ENCODE measurements at regions of chr3 and their contacts with region 1.

Region 1: GRCh38 chr3:101676765-101677435 is at the start of gene ZBTB11:
- DNase-seq: peak; percentile 100
- H3K4me3 ChIP-seq: peak within 1 kb of the TSS; percentile 86 to 98 (median 93)
- H3K27ac ChIP-seq: peak within 1 kb of the TSS; percentile 96 to 99 (median 98)
- H3K4me1 ChIP-seq: peaks cover 0 to 30% (median 17%) of the 10 kb centered on the region in 4 donors
- H3K27me3 ChIP-seq: no peaks in the 10 kb centered on the region
- CTCF ChIP-seq: peak in 2 of 4 experiments; percentile 26 to 42
- EP300 ChIP-seq: peak in 2 of 4 donors; percentile 37 to 47
- POLR2A ChIP-seq: peak; percentile 90 to 91
- total RNA-seq, gene ZBTB11: 18.6 to 24.4 (median 21.5) TPM

Region 2: GRCh38 chr3:101512646-101513418 is 164.1 kb before region 1 on chr3 and contains the start of gene SENP7:
- intact Hi-C with region 1: loop called (anchors 2 kb)
- DNase-seq: peak; percentile 92
- H3K4me3 ChIP-seq: peak within 1 kb of the TSS; percentile 76 to 88 (median 82)
- H3K27ac ChIP-seq: peak within 1 kb of the TSS; percentile 94 to 96 (median 95)
- H3K4me1 ChIP-seq: peaks cover 0 to 22% (median 14%) of the 10 kb centered on the region in 4 donors
- H3K27me3 ChIP-seq: peaks cover 0 to under 1% (median 0%) of the 10 kb centered on the region in 3 donors
- CTCF ChIP-seq: no peak
- EP300 ChIP-seq: peak in 1 of 4 donors; percentile 11
- POLR2A ChIP-seq: peak in 1 of 2 donors; percentile 13
- total RNA-seq, gene SENP7: 20.2 to 33.5 (median 30.4) TPM

Region 3: DNA sequence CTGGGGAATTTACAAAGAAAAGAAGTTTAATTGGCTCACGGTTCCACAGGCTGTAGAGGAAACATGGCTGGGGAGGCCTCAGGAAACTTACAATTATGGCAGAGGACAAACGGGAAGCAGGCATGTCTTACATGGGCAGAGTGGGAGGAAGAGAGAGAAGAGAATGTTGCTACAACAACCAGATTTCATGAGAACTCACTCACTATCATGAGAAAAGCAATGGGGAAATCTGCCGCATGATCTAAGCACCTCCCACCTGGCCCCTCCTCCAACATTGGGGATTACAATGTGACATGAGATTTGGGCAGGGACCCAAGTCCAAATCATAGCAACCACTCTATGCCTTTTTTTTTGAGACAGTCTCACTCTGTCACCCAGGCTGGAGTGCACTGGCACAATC is 74.2 kb before region 1 on chr3:
- intact Hi-C with region 1: no loop called
- DNase-seq: no peak
- H3K4me3 ChIP-seq: no peak overlapping the region
- H3K27ac ChIP-seq: no peak overlapping the region
- H3K4me1 ChIP-seq: no peaks in the 10 kb centered on the region
- H3K27me3 ChIP-seq: no peaks in the 10 kb centered on the region
- CTCF ChIP-seq: no peak
- EP300 ChIP-seq: no peak
- POLR2A ChIP-seq: no peak

Region 4: DNA sequence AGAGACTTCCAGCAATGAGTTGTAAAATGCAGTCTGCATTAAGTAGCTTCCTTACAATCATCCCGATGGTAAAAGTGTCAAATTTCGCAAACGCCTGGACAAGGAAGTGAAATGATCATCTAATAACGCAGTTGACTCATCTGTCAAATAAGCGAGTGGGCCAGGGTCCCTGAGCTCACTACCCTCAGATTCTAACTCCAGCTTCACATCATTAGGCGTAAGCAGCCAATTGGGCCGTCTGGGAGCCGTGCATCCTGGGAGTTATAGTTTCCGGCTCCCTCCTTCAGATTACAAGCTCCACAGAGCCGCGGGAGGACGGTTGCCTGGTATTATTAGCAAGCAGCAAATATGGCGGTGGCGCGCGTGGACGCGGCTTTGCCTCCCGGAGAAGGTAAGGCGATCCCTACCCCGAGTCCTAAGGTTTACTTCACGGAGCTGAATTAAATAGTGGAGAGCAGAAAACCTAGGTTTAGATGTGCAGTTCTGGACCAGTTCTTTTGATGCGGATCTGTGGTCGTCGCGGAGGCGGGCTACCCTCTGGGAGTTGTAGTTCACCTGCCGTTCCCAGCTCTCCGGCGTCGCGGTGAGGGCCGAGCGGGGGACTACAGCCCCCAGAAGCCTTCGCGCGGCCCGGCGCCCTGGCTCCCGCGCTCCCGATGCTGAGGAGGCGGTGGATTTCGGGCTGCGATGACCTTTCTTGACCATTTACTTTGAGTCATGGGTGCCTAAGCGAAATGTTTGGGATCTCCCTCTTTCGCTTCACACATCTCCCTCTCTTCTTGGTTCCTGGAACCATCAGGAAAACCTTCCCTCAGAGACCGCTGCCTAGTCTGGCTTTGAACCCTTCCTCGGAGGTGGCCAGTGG is 47.7 kb after region 1 on chr3 and contains the start of gene CEP97:
- intact Hi-C with region 1: loop called (anchors 2 kb)
- DNase-seq: peak; percentile 94
- H3K4me3 ChIP-seq: peak within 1 kb of the TSS; percentile 63 to 82 (median 66)
- H3K27ac ChIP-seq: peak within 1 kb of the TSS; percentile 76 to 86 (median 80)
- H3K4me1 ChIP-seq: peaks cover 0 to 11% (median 8%) of the 10 kb centered on the region in 4 donors
- H3K27me3 ChIP-seq: no peaks in the 10 kb centered on the region
- CTCF ChIP-seq: no peak
- EP300 ChIP-seq: peak in 1 of 4 donors; percentile 5
- POLR2A ChIP-seq: no peak
- total RNA-seq, gene CEP97: 9.0 to 11.1 (median 10.3) TPM